ENCODE measurements at regions of chr14 and their contacts with region 1.

Region 1: GRCh38 chr14:75709207-75709812 is 48.3 kb downstream of the TTLL5 start:
- DNase-seq: peak; percentile 80
- H3K4me3 Mint-ChIP-seq: no peak overlapping the region
- H3K27ac Mint-ChIP-seq: no peak overlapping the region
- H3K4me1 Mint-ChIP-seq: peaks cover 20% of the 10 kb centered on the region
- H3K27me3 Mint-ChIP-seq: no peaks in the 10 kb centered on the region
- CTCF ChIP-seq: peak; percentile 62

Region 2: GRCh38 chr14:75577729-75578101 is 131.6 kb before region 1 on chr14:
- CTCF ChIA-PET with region 1: interaction called, 12 read pairs
- POLR2A ChIA-PET with region 1: interaction called, 3 read pairs
- intact Hi-C with region 1: loop called (anchors 5 kb)
- DNase-seq: peak; percentile 90
- H3K4me3 Mint-ChIP-seq: no peak overlapping the region
- H3K27ac Mint-ChIP-seq: peak overlapping the region; percentile 11
- H3K4me1 Mint-ChIP-seq: no peaks in the 10 kb centered on the region
- H3K27me3 Mint-ChIP-seq: peaks cover 14% of the 10 kb centered on the region
- CTCF ChIP-seq: peak; percentile 80

Region 3: GRCh38 chr14:75720842-75721498 is 11.7 kb after region 1 on chr14:
- CTCF ChIA-PET with region 1: interaction called, 15 read pairs
- POLR2A ChIA-PET with region 1: interaction called, 5 read pairs
- intact Hi-C with region 1: no loop called
- DNase-seq: peak; percentile 9
- H3K4me3 Mint-ChIP-seq: no peak overlapping the region
- H3K27ac Mint-ChIP-seq: no peak overlapping the region
- H3K4me1 Mint-ChIP-seq: peaks cover 8% of the 10 kb centered on the region
- H3K27me3 Mint-ChIP-seq: no peaks in the 10 kb centered on the region
- CTCF ChIP-seq: no peak

Region 4: GRCh38 chr14:75831458-75831857 is 122.1 kb after region 1 on chr14:
- CTCF ChIA-PET with region 1: interaction called, 11 read pairs
- POLR2A ChIA-PET with region 1: no interaction called
- intact Hi-C with region 1: no loop called
- DNase-seq: peak; percentile 73
- H3K4me3 Mint-ChIP-seq: peak overlapping the region; percentile 33
- H3K27ac Mint-ChIP-seq: peak overlapping the region; percentile 96
- H3K4me1 Mint-ChIP-seq: peaks cover 28% of the 10 kb centered on the region
- H3K27me3 Mint-ChIP-seq: no peaks in the 10 kb centered on the region
- CTCF ChIP-seq: no peak

Region 5: GRCh38 chr14:75941030-75941429 is 231.7 kb after region 1 on chr14:
- CTCF ChIA-PET with region 1: no interaction called
- POLR2A ChIA-PET with region 1: no interaction called
- intact Hi-C with region 1: no loop called
- DNase-seq: no peak
- H3K4me3 Mint-ChIP-seq: no peak overlapping the region
- H3K27ac Mint-ChIP-seq: no peak overlapping the region
- H3K4me1 Mint-ChIP-seq: no peaks in the 10 kb centered on the region
- H3K27me3 Mint-ChIP-seq: no peaks in the 10 kb centered on the region
- CTCF ChIP-seq: no peak

Region 6: GRCh38 chr14:75982266-75983018 is 273.1 kb after region 1 on chr14:
- CTCF ChIA-PET with region 1: interaction called, 205 read pairs
- POLR2A ChIA-PET with region 1: interaction called, 49 read pairs
- intact Hi-C with region 1: loop called (anchors 1 kb)
- DNase-seq: peak; percentile 81
- H3K4me3 Mint-ChIP-seq: peak overlapping the region; percentile 73
- H3K27ac Mint-ChIP-seq: peak overlapping the region; percentile 78
- H3K4me1 Mint-ChIP-seq: peaks cover 34% of the 10 kb centered on the region
- H3K27me3 Mint-ChIP-seq: no peaks in the 10 kb centered on the region
- CTCF ChIP-seq: peak; percentile 72

Region 7: DNA sequence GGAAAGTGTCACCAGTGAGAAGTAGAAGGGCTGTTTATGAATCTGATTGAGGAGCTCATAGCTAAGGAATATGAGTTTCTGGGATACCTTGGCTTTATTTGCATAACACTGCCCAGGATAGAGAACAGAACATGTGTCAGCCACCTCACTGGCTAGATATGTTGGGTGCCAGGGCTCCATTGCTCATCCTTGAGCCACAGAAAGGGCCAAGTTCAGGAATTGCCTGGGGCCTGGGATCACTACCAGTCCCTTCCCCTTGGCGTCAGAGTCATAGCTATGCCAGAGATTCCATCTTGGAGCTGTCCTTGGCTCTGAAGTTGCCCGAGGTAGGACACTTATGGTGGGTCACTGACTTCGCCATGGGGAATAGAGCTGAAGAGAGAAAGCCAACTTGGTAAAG is 325.3 kb after region 1 on chr14:
- CTCF ChIA-PET with region 1: no interaction called
- POLR2A ChIA-PET with region 1: no interaction called
- intact Hi-C with region 1: no loop called
- DNase-seq: no peak
- H3K4me3 Mint-ChIP-seq: no peak overlapping the region
- H3K27ac Mint-ChIP-seq: no peak overlapping the region
- H3K4me1 Mint-ChIP-seq: no peaks in the 10 kb centered on the region
- H3K27me3 Mint-ChIP-seq: no peaks in the 10 kb centered on the region
- CTCF ChIP-seq: no peak

Region 8: GRCh38 chr14:76386915-76387782 is 677.8 kb after region 1 on chr14:
- CTCF ChIA-PET with region 1: interaction called, 5 read pairs
- POLR2A ChIA-PET with region 1: no interaction called
- intact Hi-C with region 1: loop called (anchors 2 kb)
- DNase-seq: peak; percentile 77
- H3K4me3 Mint-ChIP-seq: no peak overlapping the region
- H3K27ac Mint-ChIP-seq: no peak overlapping the region
- H3K4me1 Mint-ChIP-seq: peaks cover 3% of the 10 kb centered on the region
- H3K27me3 Mint-ChIP-seq: peaks cover 58% of the 10 kb centered on the region
- CTCF ChIP-seq: peak; percentile 99